ENCODE measurements at regions of chr19 and their contacts with region 1.

Region 1: GRCh38 chr19:13952154-13953035 is at the start of gene DCAF15:
- DNase-seq: peak; percentile 100
- H3K4me3 Mint-ChIP-seq: peak within 1 kb of the TSS; percentile 99
- H3K27ac Mint-ChIP-seq: peak within 1 kb of the TSS; percentile 97
- H3K4me1 Mint-ChIP-seq: peaks cover 14% of the 10 kb centered on the region
- H3K27me3 Mint-ChIP-seq: peaks cover 4% of the 10 kb centered on the region
- total RNA-seq, gene DCAF15: 61.5 and 63.2 TPM in 2 replicates

Region 2: DNA sequence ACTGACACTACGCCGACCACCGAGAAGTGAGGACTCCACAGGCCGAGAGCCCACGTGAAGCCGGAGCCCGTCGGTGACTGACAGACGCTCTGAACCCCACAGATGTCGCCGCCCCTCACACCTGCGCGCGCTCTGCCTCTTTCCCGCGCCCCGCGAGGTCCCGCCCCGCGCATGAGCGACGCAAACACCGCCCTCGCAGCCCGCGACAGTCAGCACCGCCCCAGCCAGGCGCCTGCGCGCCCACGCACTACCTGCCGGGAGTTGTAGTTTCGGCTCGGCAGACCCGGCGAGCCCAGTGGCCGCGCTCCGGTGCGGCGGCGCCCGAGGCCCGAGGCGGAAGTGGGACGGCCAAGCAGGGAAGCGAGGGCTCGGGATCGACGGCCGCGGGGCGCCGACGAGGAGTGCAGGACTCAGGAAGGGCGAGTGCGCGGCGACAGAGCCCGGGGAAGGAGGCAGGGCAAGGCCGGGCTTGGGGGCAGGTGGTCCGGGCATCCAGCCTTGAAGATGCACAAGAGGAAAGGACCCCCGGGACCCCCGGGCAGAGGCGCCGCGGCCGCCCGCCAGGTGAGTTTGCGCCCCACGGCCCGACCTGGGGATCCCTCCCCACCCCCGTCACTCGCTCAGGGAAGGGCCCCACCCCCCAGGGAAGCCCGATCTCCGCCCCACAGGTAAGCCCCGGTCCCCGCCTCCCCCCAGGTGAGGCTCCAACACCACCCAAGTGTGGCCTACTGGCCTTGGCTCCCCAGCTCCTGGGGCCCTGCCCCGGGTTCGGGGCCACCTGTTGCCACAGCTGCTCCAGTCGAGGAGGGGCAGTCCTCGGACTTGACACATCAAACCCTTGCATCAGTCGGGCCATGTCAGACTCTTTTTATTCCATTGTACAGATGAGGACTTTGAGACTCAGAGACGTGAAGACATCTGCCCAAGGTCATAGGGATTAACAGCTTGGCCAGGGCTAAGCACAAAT is 46.2 kb before region 1 on chr19 and contains the starts of genes BRME1 and CC2D1A:
- intact Hi-C with region 1: loop called (anchors 1 kb)
- DNase-seq: peak; percentile 99
- H3K4me3 Mint-ChIP-seq: peak within 1 kb of the TSS; percentile 84
- H3K27ac Mint-ChIP-seq: peak within 1 kb of the TSS; percentile 94
- H3K4me1 Mint-ChIP-seq: peaks cover 15% of the 10 kb centered on the region
- H3K27me3 Mint-ChIP-seq: no peaks in the 10 kb centered on the region
- total RNA-seq, gene BRME1: 16.2 and 18.6 TPM in 2 replicates
- total RNA-seq, gene CC2D1A: 38.5 and 39.4 TPM in 2 replicates

Region 3: GRCh38 chr19:13975870-13976269 is 23.5 kb after region 1 on chr19:
- intact Hi-C with region 1: no loop called
- DNase-seq: no peak
- H3K4me3 Mint-ChIP-seq: no peak overlapping the region
- H3K27ac Mint-ChIP-seq: no peak overlapping the region
- H3K4me1 Mint-ChIP-seq: peaks cover 5% of the 10 kb centered on the region
- H3K27me3 Mint-ChIP-seq: no peaks in the 10 kb centered on the region

Region 4: GRCh38 chr19:13986348-13986904 is 34.0 kb after region 1 on chr19:
- intact Hi-C with region 1: loop called (anchors 1 kb)
- DNase-seq: peak; percentile 99
- H3K4me3 Mint-ChIP-seq: peak overlapping the region; percentile 80
- H3K27ac Mint-ChIP-seq: peak overlapping the region; percentile 95
- H3K4me1 Mint-ChIP-seq: peaks cover 43% of the 10 kb centered on the region
- H3K27me3 Mint-ChIP-seq: no peaks in the 10 kb centered on the region

Region 5: GRCh38 chr19:14031719-14032480 is 79.5 kb after region 1 on chr19 and contains the start of gene IL27RA:
- intact Hi-C with region 1: loop called (anchors 2 kb)
- DNase-seq: peak; percentile 95
- H3K4me3 Mint-ChIP-seq: peak within 1 kb of the TSS; percentile 97
- H3K27ac Mint-ChIP-seq: peak within 1 kb of the TSS; percentile 95
- H3K4me1 Mint-ChIP-seq: peaks cover 18% of the 10 kb centered on the region
- H3K27me3 Mint-ChIP-seq: peaks cover 7% of the 10 kb centered on the region
- total RNA-seq, gene IL27RA: 81.6 and 86.4 TPM in 2 replicates

Region 6: GRCh38 chr19:14081325-14082093 is 129.1 kb after region 1 on chr19:
- intact Hi-C with region 1: loop called (anchors 1 kb)
- DNase-seq: peak; percentile 100
- H3K4me3 Mint-ChIP-seq: peak overlapping the region; percentile 96
- H3K27ac Mint-ChIP-seq: peak overlapping the region; percentile 93
- H3K4me1 Mint-ChIP-seq: peaks cover 19% of the 10 kb centered on the region
- H3K27me3 Mint-ChIP-seq: no peaks in the 10 kb centered on the region